ENCODE measurements at regions of chr12 and their contacts with region 1.

Region 1: GRCh38 chr12:32548691-32549281 is 130.3 kb upstream of the DNM1L start:
- DNase-seq: peak in 4 of 5 donors; percentile 30 to 62 (median 46)
- ATAC-seq: peak; percentile 55 to 68 (median 62)
- H3K4me3 ChIP-seq: peak overlapping the region in 4 of 12 donors; percentile 2 to 22 (median 6)
- H3K27ac ChIP-seq: peak overlapping the region; percentile 60 to 89 (median 78)
- H3K4me1 ChIP-seq: peaks cover 9 to 85% (median 57%) of the 10 kb centered on the region in 12 donors
- H3K27me3 ChIP-seq: no peaks in the 10 kb centered on the region
- CTCF ChIP-seq: no peak
- POLR2A ChIP-seq: no peak

Region 2: GRCh38 chr12:32467959-32468863 is 80.6 kb before region 1 on chr12:
- intact Hi-C with region 1: loop called in 1 of 10 experiments (anchors 10 kb)
- DNase-seq: peak in 1 of 5 donors; percentile 46
- ATAC-seq: peak; percentile 53 to 74 (median 62)
- H3K4me3 ChIP-seq: no peak overlapping the region
- H3K27ac ChIP-seq: peak overlapping the region; percentile 9 to 73 (median 64)
- H3K4me1 ChIP-seq: peaks cover 0 to 23% (median 12%) of the 10 kb centered on the region in 12 donors
- H3K27me3 ChIP-seq: no peaks in the 10 kb centered on the region
- CTCF ChIP-seq: no peak
- POLR2A ChIP-seq: no peak

Region 3: DNA sequence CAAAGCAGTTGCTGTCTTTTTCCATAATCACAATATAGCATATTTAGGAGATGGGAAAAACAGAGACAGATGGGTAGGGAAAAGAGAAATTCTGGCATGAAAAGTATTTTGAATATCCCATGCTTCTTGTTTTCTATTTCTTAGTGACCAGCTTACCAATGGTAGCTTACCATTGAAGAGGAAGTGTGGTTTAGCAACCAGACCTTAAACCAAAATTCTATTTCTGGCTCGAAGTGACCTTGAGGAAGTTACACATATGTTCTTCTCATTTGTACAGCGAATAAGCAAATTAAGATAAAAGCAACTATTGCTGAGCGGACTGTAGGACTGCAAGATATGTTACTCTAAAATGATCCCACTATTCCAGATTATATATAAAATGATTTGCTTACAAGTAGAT is 66.6 kb before region 1 on chr12:
- intact Hi-C with region 1: no loop called
- DNase-seq: no peak
- ATAC-seq: peak; percentile 46 to 70 (median 56)
- H3K4me3 ChIP-seq: peak overlapping the region in 1 of 12 donors; percentile 4
- H3K27ac ChIP-seq: peak overlapping the region; percentile 15 to 92 (median 50)
- H3K4me1 ChIP-seq: peaks cover 0 to 43% (median 29%) of the 10 kb centered on the region in 12 donors
- H3K27me3 ChIP-seq: no peaks in the 10 kb centered on the region
- CTCF ChIP-seq: no peak
- POLR2A ChIP-seq: no peak

Region 4: GRCh38 chr12:32501835-32502333 is 46.9 kb before region 1 on chr12:
- intact Hi-C with region 1: loop called in 1 of 10 experiments (anchors 5 kb)
- DNase-seq: peak in 3 of 5 donors; percentile 22 to 42 (median 36)
- ATAC-seq: peak; percentile 29 to 71 (median 60)
- H3K4me3 ChIP-seq: peak overlapping the region in 10 of 12 donors; percentile 4 to 60 (median 41)
- H3K27ac ChIP-seq: peak overlapping the region in 10 of 12 donors; percentile 36 to 85 (median 68)
- H3K4me1 ChIP-seq: peaks cover 7 to 88% (median 53%) of the 10 kb centered on the region in 12 donors
- H3K27me3 ChIP-seq: no peaks in the 10 kb centered on the region
- CTCF ChIP-seq: no peak
- POLR2A ChIP-seq: no peak

Measured in heart left ventricle (tissue), 16 donors.